Mammary epithelial cell (primary cell): ENCODE measurements at regions of chr12 and their contacts with region 1.

Region 1: DNA sequence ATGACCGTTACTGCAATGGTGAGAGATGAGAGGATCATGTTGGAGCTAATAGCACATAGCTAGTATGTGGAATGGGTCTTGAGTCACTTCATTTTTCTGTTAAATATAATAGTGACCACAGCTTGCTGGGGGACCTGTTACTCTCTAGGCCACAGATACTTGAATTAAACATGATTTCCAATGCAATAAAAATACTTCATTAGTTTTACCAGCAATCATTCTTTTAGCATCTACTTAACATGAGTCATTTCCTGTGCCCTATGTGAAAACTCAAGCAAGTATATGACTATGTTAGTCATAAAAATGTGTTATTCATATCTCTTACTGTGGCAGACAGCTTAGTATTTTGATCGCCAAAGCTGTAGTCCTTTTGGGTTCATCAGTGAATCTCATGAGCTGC is 798.8 kb downstream of the SLC16A7 start:
- DNase-seq: peak; percentile 79
- H3K4me3 ChIP-seq: no peak overlapping the region
- H3K27ac ChIP-seq: peak overlapping the region; percentile 0
- H3K4me1 ChIP-seq: peaks cover 13% of the 10 kb centered on the region
- H3K27me3 ChIP-seq: no peaks in the 10 kb centered on the region
- CTCF ChIP-seq: no peak

Region 2: DNA sequence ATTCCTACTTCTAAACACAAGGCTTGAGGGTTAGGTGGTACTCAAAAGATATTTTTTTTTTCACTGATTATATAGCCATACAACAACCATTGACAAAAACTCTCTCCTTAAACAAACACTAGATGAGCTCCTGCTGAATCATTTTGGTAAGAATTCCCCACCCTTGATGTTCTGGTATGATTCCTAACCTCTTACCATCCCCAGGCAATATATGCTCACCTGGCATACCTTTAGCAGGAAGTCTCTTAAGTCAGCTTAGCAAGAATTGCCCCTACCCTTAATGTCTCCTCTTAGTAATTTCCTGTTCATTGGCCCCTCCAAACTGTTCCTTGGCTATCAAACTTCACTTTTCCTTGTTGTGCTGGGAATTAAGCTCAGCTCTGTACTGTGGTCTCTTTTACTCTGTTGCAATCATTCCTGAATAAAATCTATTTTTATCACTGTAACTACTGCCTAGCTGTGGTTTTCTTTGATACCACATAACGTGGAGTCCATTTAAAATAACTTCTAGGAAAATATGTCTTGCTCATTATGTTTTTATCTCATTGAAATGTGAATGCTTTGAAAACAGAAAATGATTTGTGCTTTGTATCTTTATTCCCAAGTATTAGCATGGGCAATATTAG is 86.2 kb before region 1 on chr12:
- CTCF ChIA-PET with region 1: interaction called, 4 read pairs
- dilution Hi-C with region 1: no loop called
- in situ Hi-C with region 1: no loop called
- intact Hi-C with region 1: loop called (anchors 1 kb)
- DNase-seq: peak; percentile 90
- H3K4me3 ChIP-seq: no peak overlapping the region
- H3K27ac ChIP-seq: no peak overlapping the region
- H3K4me1 ChIP-seq: peaks cover 12% of the 10 kb centered on the region
- H3K27me3 ChIP-seq: no peaks in the 10 kb centered on the region
- CTCF ChIP-seq: no peak

Region 3: GRCh38 chr12:60489071-60489470 is 94.4 kb after region 1 on chr12:
- CTCF ChIA-PET with region 1: no interaction called
- dilution Hi-C with region 1: loop called (anchors 5 kb)
- in situ Hi-C with region 1: no loop called
- intact Hi-C with region 1: no loop called
- DNase-seq: peak; percentile 50
- H3K4me3 ChIP-seq: no peak overlapping the region
- H3K27ac ChIP-seq: no peak overlapping the region
- H3K4me1 ChIP-seq: no peaks in the 10 kb centered on the region
- H3K27me3 ChIP-seq: no peaks in the 10 kb centered on the region
- CTCF ChIP-seq: no peak

Region 4: GRCh38 chr12:60920841-60921495 is 526.3 kb after region 1 on chr12:
- CTCF ChIA-PET with region 1: no interaction called
- dilution Hi-C with region 1: no loop called
- in situ Hi-C with region 1: no loop called
- intact Hi-C with region 1: loop called (anchors 5 kb)
- DNase-seq: peak; percentile 62
- H3K4me3 ChIP-seq: no peak overlapping the region
- H3K27ac ChIP-seq: no peak overlapping the region
- H3K4me1 ChIP-seq: no peaks in the 10 kb centered on the region
- H3K27me3 ChIP-seq: no peaks in the 10 kb centered on the region
- CTCF ChIP-seq: no peak